PC-9 (cell line): ENCODE measurements at regions of chr17 and their contacts with region 1.

Region 1: DNA sequence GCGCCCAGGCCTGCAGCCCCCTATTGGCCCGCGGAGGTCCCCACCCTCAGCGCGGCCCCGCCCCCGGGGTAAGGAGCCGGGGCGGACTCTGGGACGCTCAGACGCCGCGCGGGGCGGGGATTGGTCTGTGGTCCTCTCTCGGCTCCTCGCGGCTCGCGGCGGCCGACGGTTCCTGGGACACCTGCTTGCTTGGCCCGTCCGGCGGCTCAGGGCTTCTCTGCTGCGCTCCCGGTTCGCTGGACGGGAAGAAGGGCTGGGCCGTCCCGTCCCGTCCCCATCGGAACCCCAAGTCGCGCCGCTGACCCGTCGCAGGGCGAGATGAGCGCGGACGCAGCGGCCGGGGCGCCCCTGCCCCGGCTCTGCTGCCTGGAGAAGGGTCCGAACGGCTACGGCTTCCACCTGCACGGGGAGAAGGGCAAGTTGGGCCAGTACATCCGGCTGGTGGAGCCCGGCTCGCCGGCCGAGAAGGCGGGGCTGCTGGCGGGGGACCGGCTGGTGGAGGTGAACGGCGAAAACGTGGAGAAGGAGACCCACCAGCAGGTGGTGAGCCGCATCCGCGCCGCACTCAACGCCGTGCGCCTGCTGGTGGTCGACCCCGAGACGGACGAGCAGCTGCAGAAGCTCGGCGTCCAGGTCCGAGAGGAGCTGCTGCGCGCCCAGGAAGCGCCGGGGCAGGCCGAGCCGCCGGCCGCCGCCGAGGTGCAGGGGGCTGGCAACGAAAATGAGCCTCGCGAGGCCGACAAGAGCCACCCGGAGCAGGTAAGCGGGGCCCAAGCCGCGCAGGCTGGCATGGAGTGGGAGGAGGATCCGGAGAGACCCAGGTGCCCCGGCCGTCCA is at the start of gene NHERF1:
- DNase-seq: peak; percentile 30 to 78
- H3K4me3 ChIP-seq: peak within 1 kb of the TSS; percentile 99
- H3K27ac ChIP-seq: no peak within 1 kb of the TSS
- H3K4me1 ChIP-seq: peaks cover 39% of the 10 kb centered on the region
- H3K27me3 ChIP-seq: no peaks in the 10 kb centered on the region
- CTCF ChIP-seq: 0 out of 2 replicates have a peak, but pooled peaks have one; percentile 29
- total RNA-seq, gene NHERF1: 83.6 and 105 TPM in 2 replicates

Region 2: GRCh38 chr17:74558882-74559519 is 189.7 kb before region 1 on chr17:
- CTCF ChIA-PET with region 1: no interaction called
- POLR2A ChIA-PET with region 1: no interaction called
- intact Hi-C with region 1: no loop called
- DNase-seq: no peak
- H3K4me3 ChIP-seq: no peak overlapping the region
- H3K27ac ChIP-seq: no peak overlapping the region
- H3K4me1 ChIP-seq: no peaks in the 10 kb centered on the region
- H3K27me3 ChIP-seq: peaks cover 99% of the 10 kb centered on the region
- CTCF ChIP-seq: no peak

Region 3: DNA sequence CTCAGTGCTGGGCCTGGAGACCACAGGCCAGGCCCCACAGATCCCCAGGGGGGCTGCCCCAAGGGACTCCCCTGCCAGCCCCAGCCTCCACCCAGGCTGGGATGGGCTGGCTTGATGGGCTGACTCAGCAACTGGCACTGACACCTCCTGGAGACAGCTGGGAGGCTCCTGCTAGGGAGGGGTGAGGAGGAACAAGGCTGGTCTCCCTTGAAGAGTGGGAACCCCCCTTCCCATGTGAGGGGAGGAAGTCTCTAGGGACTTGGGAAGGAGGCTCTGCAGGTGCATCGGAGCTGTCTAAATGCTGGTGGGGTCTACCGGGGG is 10.1 kb after region 1 on chr17:
- CTCF ChIA-PET with region 1: interaction called, 8 read pairs
- POLR2A ChIA-PET with region 1: interaction called, 7 read pairs
- intact Hi-C with region 1: loop called (anchors 1 kb)
- DNase-seq: peak in 1 of 2 experiments; percentile 31
- H3K4me3 ChIP-seq: no peak overlapping the region
- H3K27ac ChIP-seq: no peak overlapping the region
- H3K4me1 ChIP-seq: peaks cover 50% of the 10 kb centered on the region
- H3K27me3 ChIP-seq: no peaks in the 10 kb centered on the region
- CTCF ChIP-seq: no peak

Region 4: DNA sequence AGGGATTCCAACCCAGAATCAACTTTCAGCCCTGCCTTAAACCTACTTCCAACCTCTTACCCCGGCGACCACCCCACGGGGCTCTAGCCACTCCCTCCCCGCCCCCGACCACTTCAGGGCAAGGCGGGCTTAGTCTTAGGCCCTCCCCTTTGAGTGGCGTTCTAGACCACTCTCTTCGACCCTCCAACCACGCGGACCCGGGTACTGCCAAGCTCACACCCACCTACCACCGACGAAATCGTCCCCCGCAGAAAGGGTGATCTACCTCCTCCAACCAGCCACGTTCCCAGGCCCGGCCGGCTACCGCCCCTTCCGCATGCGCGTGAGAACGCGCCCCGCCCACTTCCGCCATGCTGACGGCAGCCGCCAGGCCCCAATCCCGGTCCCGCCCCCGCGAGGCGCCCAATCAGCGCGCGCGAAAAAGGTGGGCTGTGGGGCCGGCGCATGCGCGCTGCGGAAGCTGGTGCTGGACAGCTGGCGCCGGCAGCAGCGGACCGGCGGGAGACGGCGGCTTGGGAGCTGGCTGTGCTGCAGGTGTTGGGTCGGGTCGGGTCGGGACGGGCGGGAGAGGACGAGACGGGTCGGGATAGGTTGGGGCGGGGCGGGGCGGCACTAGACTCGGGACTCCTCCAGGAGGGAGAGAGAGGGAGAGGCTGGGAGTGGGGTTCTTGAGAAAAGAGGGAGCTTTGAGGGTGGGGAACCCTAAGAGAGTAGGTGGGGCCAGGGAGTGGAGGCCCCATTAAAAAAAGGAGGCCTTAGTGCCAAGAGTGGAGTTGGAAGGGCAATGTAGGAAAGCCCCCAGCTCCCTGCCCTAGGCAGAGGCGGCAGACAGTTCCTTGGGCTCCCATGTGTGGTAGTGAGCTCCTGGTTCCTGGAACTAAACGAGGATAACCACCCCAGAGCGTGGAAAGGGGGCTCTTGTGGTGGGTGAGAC is 27.6 kb after region 1 on chr17 and contains the start of gene NAT9:
- CTCF ChIA-PET with region 1: interaction called, 12 read pairs
- POLR2A ChIA-PET with region 1: no interaction called
- intact Hi-C with region 1: loop called (anchors 5 kb)
- DNase-seq: peak; percentile 83 to 99
- H3K4me3 ChIP-seq: peak within 1 kb of the TSS; percentile 58
- H3K27ac ChIP-seq: 0 out of 2 replicates have a peak within 1 kb of the TSS, but pooled peaks have one; percentile 20
- H3K4me1 ChIP-seq: peaks cover 16% of the 10 kb centered on the region
- H3K27me3 ChIP-seq: no peaks in the 10 kb centered on the region
- CTCF ChIP-seq: no peak
- total RNA-seq, gene NAT9: 31.5 and 37.6 TPM in 2 replicates

Region 5: GRCh38 chr17:74864866-74865395 is 116.2 kb after region 1 on chr17:
- CTCF ChIA-PET with region 1: interaction called, 17 read pairs
- POLR2A ChIA-PET with region 1: no interaction called
- intact Hi-C with region 1: loop called (anchors 2 kb)
- DNase-seq: peak; percentile 43 to 68
- H3K4me3 ChIP-seq: no peak overlapping the region
- H3K27ac ChIP-seq: no peak overlapping the region
- H3K4me1 ChIP-seq: no peaks in the 10 kb centered on the region
- H3K27me3 ChIP-seq: peaks cover 5% of the 10 kb centered on the region; the same call in 1 of the 2 replicates
- CTCF ChIP-seq: peak; percentile 97

Region 6: GRCh38 chr17:74945543-74945942 is 196.8 kb after region 1 on chr17:
- CTCF ChIA-PET with region 1: interaction called, 13 read pairs
- POLR2A ChIA-PET with region 1: no interaction called
- intact Hi-C with region 1: no loop called
- DNase-seq: no peak
- H3K4me3 ChIP-seq: no peak overlapping the region
- H3K27ac ChIP-seq: no peak overlapping the region
- H3K4me1 ChIP-seq: peaks cover 29% of the 10 kb centered on the region
- H3K27me3 ChIP-seq: no peaks in the 10 kb centered on the region
- CTCF ChIP-seq: no peak